ENCODE measurements at regions of chr1 and their contacts with region 1.

Region 1: GRCh38 chr1:115138968-115139367 is 49.7 kb upstream of the TSPAN2 start:
- DNase-seq: peak; percentile 83
- CTCF ChIP-seq: peak; percentile 82

Region 2: DNA sequence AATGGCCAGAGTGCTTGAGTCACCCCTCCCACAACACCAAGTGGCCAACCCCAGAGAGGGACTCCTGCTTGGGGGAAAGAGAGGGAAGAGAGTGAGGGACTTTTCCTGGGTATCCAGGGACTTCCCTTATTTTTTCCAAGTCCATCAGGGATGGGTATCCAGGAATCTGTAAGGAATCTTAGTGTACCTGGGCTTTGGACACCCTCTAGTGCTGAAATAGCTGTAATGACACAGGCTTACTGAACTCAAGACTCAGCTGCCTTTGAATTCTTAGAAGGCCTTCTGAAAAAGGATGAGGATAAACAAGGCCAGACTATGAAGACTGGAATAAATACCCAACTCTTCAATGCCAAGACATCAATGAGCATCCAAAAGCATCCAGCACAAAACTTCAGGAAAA is 97.3 kb before region 1 on chr1:
- in situ Hi-C with region 1: no loop called
- DNase-seq: no peak
- CTCF ChIP-seq: no peak

Region 3: DNA sequence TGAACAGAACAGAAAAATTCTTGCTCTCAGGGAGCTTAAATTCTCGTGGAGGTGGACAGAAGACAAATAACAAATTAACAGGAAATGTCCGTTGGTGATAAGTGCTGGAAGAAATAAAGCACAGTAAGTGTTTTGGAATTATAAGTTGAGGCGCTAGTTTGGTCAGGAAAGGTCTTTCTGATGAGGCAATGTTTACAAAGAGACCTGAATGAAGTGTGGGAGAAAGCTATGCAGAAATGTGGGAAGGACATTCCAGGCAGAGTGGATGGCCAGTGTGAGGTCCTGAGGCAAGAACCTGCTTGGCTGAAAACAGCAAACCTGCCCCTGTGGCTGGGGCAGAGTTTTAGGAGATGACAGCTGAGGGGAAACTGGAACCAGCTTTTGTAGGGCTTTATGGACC is 175.8 kb after region 1 on chr1:
- in situ Hi-C with region 1: no loop called
- DNase-seq: no peak
- CTCF ChIP-seq: no peak

Region 4: DNA sequence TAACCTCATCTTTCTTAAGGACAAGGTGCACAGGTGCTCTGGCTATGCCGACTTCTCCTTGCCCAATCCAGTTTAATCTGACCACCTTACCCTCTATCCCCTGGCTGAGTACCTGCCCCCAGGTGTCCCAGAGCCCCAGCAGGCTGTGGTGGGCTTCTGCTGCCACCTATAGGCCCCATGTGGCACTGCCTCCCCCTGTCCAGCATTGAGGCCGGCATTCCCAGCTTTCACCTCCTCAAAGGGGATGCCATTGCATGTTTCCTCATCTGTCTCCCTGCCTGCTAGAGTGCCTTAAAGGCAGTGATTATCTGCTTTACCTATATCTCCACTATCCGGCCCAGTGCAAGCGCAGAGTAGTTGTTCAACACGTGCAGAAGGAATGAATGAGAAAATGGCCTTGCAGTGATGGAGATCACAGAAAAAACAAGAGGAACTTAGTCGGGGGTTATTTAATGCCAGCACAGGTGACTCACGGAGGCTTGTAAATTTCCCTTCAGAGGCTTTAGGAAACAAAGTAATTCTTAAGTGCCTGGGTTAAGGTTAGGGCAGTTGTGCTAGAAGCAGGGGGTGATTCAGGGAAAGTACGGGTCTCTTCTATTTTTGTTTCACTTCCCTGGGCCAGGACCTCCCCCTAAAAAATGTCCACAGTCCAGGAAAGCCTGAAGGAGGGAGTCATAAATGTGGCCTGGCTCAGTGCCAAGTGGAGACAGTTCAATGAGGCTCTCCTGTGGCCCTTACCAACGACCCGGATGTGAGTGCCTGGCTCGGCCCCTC is 330.9 kb after region 1 on chr1:
- in situ Hi-C with region 1: loop called (anchors 10 kb)
- DNase-seq: peak; percentile 57
- CTCF ChIP-seq: peak; percentile 75

Region 5: DNA sequence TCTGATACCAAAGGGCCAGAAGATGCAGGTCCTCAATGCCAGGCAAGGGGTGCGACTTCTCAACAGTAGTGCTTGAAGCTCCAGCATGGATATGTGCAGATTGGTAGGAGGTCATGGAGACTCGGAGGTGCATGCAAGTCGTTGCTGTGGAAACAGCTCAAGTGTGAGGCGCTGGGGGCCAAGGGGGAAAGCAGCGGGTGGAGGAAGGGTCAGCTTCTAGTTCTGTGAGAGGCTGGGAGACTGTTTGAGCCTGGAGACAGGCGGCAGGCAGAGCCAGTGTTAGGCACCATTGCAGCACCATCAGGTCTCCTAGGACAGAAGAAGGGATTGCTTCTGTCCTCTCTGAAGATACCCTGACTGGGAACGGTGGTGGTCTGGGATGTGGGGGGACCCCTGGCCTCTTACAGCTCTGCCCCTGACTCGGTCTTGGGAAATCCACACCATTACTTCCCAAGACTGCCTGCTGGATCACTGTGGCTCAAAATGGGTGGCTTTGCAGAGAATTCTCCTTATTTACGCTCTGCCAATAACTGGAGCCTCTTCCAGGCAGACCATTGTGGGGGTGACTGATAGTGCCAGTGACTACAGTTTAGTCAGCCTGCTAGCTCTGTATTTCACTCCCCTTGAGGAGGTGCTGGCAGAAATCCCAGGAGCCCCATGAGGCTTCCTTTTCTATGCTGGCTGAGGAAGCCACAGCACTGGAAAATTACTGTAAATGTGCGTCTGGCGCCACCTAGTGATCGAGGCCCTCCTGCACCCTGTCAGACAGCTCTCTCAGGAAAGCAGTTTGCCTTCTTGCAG is 456.5 kb after region 1 on chr1:
- in situ Hi-C with region 1: loop called (anchors 25 kb)
- DNase-seq: peak; percentile 64
- CTCF ChIP-seq: peak; percentile 92

Measured in GM13976 (cell line).